Activated CD8-positive, alpha-beta T cell treated with anti-CD3 and anti-CD28 coated beads for 36 hours (primary cell): ENCODE measurements at regions of chr9 and their contacts with region 1.

Region 1: GRCh38 chr9:73743826-73744225 is 592.2 kb downstream of the ANXA1 start:
- DNase-seq: no peak
- ATAC-seq: no peak
- H3K4me3 Mint-ChIP-seq: no peak overlapping the region
- H3K27ac Mint-ChIP-seq: no peak overlapping the region
- H3K4me1 Mint-ChIP-seq: no peaks in the 10 kb centered on the region
- H3K27me3 Mint-ChIP-seq: no peaks in the 10 kb centered on the region
- CTCF ChIP-seq: no peak

Region 2: DNA sequence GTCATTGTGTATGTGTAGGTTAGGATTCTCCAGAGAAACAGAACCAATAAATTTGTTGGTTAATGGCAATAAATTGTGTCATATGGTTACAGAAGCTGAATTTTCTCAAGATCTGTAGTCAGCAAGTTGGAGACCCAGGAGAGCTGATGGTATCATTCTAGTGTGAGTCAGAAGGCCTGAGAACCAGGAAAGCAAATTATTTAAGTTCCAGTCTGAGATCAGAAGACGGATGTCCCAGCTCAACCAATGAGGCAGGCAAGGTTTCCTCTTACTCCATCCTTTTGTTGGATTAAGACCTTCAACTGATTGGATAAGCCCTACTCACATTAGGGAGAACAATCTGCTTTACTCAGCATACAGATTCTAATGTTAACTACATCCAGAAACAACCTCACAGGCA is 64.1 kb after region 1 on chr9:
- CTCF ChIA-PET with region 1: no interaction called
- POLR2A ChIA-PET with region 1: no interaction called
- intact Hi-C with region 1: loop called (anchors 10 kb)
- DNase-seq: no peak
- ATAC-seq: no peak
- H3K4me3 Mint-ChIP-seq: no peak overlapping the region
- H3K27ac Mint-ChIP-seq: no peak overlapping the region
- H3K4me1 Mint-ChIP-seq: no peaks in the 10 kb centered on the region
- H3K27me3 Mint-ChIP-seq: no peaks in the 10 kb centered on the region
- CTCF ChIP-seq: no peak